ENCODE measurements at regions of chr10 and their contacts with region 1.

Region 1: GRCh38 chr10:99435986-99436638 is 5.7 kb upstream of the GOT1 start:
- DNase-seq: peak; percentile 36
- H3K4me3 ChIP-seq: no peak overlapping the region
- H3K27ac ChIP-seq: no peak overlapping the region
- H3K4me1 ChIP-seq: peaks cover 0 to 4% of the 10 kb centered on the region in 2 experiments; a peak in 2 of 4 replicates
- H3K27me3 ChIP-seq: no peaks in the 10 kb centered on the region
- CTCF ChIP-seq: peak; percentile 78
- EP300 ChIP-seq: no peak
- RAD21 ChIP-seq: peak; percentile 74

Region 2: GRCh38 chr10:99450624-99451498 is 14.7 kb after region 1 on chr10:
- CTCF ChIA-PET with region 1: interaction called, 40 read pairs
- POLR2A ChIA-PET with region 1: interaction called, 3 read pairs
- DNase-seq: peak; percentile 14
- H3K4me3 ChIP-seq: no peak overlapping the region
- H3K27ac ChIP-seq: no peak overlapping the region
- H3K4me1 ChIP-seq: no peaks in the 10 kb centered on the region; a peak in 1 of 4 replicates
- H3K27me3 ChIP-seq: peaks cover 55% of the 10 kb centered on the region
- CTCF ChIP-seq: no peak
- EP300 ChIP-seq: no peak
- RAD21 ChIP-seq: no peak

Region 3: GRCh38 chr10:99548041-99548530 is 112.0 kb after region 1 on chr10:
- CTCF ChIA-PET with region 1: interaction called, 12 read pairs
- POLR2A ChIA-PET with region 1: no interaction called
- DNase-seq: peak; percentile 35
- H3K4me3 ChIP-seq: no peak overlapping the region
- H3K27ac ChIP-seq: no peak overlapping the region
- H3K4me1 ChIP-seq: peaks cover 0 to 6% of the 10 kb centered on the region in 2 experiments; a peak in 1 of 4 replicates
- H3K27me3 ChIP-seq: peaks cover 80% of the 10 kb centered on the region; the same call in 1 of the 2 replicates
- CTCF ChIP-seq: peak; percentile 44
- EP300 ChIP-seq: no peak
- RAD21 ChIP-seq: peak; percentile 36

Region 4: GRCh38 chr10:99612167-99612831 is 176.2 kb after region 1 on chr10:
- CTCF ChIA-PET with region 1: interaction called, 118 read pairs
- POLR2A ChIA-PET with region 1: interaction called, 4 read pairs
- DNase-seq: peak; percentile 77
- H3K4me3 ChIP-seq: peak overlapping the region in 1 of 2 experiments; percentile 11; a peak in 1 of 4 replicates
- H3K27ac ChIP-seq: no peak overlapping the region
- H3K4me1 ChIP-seq: no peaks in the 10 kb centered on the region; a peak in 1 of 4 replicates
- H3K27me3 ChIP-seq: no peaks in the 10 kb centered on the region
- CTCF ChIP-seq: peak; percentile 84
- EP300 ChIP-seq: no peak
- RAD21 ChIP-seq: peak; percentile 87

Region 5: GRCh38 chr10:99667108-99667751 is 231.1 kb after region 1 on chr10:
- CTCF ChIA-PET with region 1: no interaction called
- POLR2A ChIA-PET with region 1: no interaction called
- DNase-seq: peak; percentile 23
- H3K4me3 ChIP-seq: no peak overlapping the region; a peak in 1 of 4 replicates
- H3K27ac ChIP-seq: peak overlapping the region in 1 of 2 experiments; percentile 95; a peak in 2 of 4 replicates
- H3K4me1 ChIP-seq: peaks cover 0 to 11% of the 10 kb centered on the region in 2 experiments; a peak in 2 of 4 replicates
- H3K27me3 ChIP-seq: no peaks in the 10 kb centered on the region
- CTCF ChIP-seq: no peak
- EP300 ChIP-seq: peak in 1 of 2 experiments; percentile 86; a peak in 2 of 4 replicates
- RAD21 ChIP-seq: no peak